ENCODE measurements at regions of chr19 and their contacts with region 1.

Region 1: GRCh38 chr19:6218491-6219162 is 61.1 kb downstream of the MLLT1 start:
- DNase-seq: no peak
- H3K4me3 ChIP-seq: no peak overlapping the region
- H3K27me3 ChIP-seq: no peaks in the 10 kb centered on the region
- CTCF ChIP-seq: peak; percentile 93

Region 2: DNA sequence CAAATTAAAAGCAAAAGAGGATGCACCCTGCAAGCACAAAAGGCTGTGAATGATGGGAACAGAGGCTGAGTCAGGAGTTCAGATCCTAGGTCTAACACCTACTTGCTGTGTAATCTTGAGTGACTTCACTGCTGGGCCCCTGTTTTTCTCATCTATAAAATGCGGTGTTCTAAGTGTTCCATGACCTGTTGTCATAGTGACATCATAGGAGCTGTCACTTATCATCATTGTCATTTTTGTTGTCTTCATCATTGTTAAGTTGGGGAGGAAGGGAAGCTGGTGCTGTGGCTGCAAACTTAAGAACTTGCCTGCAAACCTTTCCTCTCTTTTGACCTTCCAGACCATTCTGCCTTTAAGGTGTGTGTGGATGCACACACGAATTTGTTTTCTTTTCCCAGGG is 62.6 kb before region 1 on chr19:
- CTCF ChIA-PET with region 1: no interaction called
- POLR2A ChIA-PET with region 1: no interaction called
- DNase-seq: no peak
- H3K4me3 ChIP-seq: no peak overlapping the region
- H3K27me3 ChIP-seq: no peaks in the 10 kb centered on the region
- CTCF ChIP-seq: no peak

Region 3: GRCh38 chr19:6233051-6233826 is 14.6 kb after region 1 on chr19:
- CTCF ChIA-PET with region 1: interaction called, 18 read pairs
- POLR2A ChIA-PET with region 1: no interaction called
- DNase-seq: no peak
- H3K4me3 ChIP-seq: no peak overlapping the region
- H3K27me3 ChIP-seq: no peaks in the 10 kb centered on the region
- CTCF ChIP-seq: no peak

Region 4: GRCh38 chr19:6271721-6272410 is 53.2 kb after region 1 on chr19:
- CTCF ChIA-PET with region 1: interaction called, 38 read pairs
- POLR2A ChIA-PET with region 1: no interaction called
- DNase-seq: no peak
- H3K4me3 ChIP-seq: peak overlapping the region; percentile 8; the same call in 1 of the 2 replicates
- H3K27me3 ChIP-seq: no peaks in the 10 kb centered on the region
- CTCF ChIP-seq: peak; percentile 27; the same call in 1 of the 2 replicates

Region 5: DNA sequence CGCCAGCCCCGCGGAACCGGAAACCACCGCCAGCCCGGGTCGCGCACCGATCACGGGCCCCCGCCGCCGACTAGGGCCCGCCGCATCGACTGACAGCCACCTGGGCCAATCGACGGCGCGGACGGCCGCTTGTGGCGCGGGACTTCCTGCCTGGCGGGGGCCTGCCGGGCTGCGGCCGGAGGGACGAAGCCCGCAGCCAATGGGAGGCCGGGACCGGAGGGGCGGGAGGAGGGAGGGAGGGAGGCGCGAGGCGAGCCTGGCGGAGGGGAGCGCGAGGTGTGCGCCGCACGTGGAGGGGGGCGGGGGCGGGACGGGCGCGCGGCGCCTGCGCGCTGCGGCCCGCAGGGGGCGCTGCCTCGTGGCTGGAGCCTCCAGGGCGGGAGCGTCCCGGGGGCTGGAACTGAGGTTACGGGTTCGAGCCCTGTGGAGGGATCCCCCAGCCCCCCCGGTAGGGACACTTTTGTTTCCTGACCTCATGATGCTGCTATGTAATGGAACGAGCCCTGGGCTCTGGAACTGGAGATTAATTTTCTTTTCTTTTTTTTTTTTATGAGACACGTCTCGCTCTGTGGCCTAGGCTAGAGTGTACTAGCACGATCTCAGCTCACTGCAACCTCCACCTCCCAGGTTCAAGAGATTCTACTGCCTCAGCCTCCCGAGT is 61.4 kb after region 1 on chr19 and contains the start of gene MLLT1:
- CTCF ChIA-PET with region 1: interaction called, 38 read pairs
- POLR2A ChIA-PET with region 1: no interaction called
- DNase-seq: peak; percentile 74
- H3K4me3 ChIP-seq: peak within 1 kb of the TSS; percentile 88
- H3K27me3 ChIP-seq: no peaks in the 10 kb centered on the region
- CTCF ChIP-seq: peak; percentile 54
- polyA plus RNA-seq, gene MLLT1: 19.0 and 28.1 TPM in 2 replicates

Region 6: DNA sequence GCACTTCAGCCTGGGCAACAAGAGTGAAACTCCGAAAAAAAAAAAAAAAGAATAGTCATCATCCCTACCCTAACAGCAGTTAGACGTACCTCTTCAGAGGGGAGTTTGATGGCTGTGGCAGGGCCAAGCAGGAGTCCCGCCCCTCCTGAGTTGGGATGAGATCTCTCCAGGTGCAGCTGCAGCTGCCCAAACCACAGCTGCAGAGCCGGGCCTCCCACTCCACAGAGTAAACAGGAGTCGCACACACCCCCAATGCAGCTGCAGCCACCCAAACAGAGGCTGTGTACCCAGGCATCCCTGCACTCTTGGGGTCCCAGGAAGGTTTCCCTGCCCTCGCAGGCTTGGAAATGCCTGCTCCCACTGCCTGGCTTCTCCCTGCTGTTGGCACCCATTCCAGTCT is 78.6 kb after region 1 on chr19:
- CTCF ChIA-PET with region 1: interaction called, 160 read pairs
- POLR2A ChIA-PET with region 1: no interaction called
- DNase-seq: no peak
- H3K4me3 ChIP-seq: no peak overlapping the region
- H3K27me3 ChIP-seq: 0 out of 2 replicates have a peak, but pooled peaks cover 2% of the 10 kb centered on the region
- CTCF ChIP-seq: no peak

Region 7: DNA sequence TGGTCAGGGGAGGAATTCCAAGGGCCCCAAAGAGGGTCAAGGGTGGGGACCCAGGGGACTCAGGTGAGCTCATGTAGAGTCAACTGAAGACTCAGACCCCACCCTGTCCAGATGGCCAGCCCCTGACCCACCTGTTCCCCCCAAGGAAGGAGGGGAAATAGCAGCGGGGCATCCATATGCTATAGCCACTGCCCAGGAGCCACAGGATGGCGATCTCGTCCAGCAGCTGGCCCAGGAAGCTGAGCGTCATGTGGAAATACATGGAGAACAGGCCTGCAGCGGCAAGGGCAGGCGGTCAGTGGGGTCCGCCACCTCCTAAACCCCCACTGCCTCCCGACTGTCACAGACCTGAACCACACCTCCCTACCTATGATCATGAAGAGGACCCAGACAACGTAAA is 93.4 kb after region 1 on chr19:
- CTCF ChIA-PET with region 1: interaction called, 12 read pairs
- POLR2A ChIA-PET with region 1: no interaction called
- DNase-seq: no peak
- H3K4me3 ChIP-seq: no peak overlapping the region
- H3K27me3 ChIP-seq: no peaks in the 10 kb centered on the region
- CTCF ChIP-seq: no peak

Region 8: DNA sequence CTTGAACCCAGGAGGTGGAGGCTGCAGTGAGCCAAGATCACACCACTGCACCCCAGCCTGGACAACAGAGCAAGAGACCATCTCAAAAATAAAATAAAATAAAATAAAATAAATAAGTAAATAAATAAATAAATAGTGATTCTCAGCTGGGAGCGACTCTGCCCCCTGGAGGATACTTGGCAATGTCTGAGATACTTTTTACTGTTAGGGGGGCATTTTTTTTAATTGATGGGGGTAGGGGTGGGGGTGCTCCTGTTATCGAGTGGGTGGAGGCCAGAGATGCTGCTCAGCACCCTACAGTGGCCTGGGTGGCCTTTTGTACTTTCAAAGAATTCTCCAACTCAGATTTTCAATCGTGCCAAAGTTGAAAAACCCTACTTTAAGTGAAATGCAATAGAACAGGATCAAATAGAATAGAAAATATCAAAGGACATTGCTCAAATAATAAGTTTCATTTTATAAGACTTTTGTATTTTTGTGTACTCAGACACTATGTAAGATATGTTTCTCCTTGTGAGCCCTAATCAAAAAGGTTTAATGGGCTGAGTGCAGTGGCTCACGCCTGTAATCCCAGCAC is 135.6 kb after region 1 on chr19:
- CTCF ChIA-PET with region 1: interaction called, 17 read pairs
- POLR2A ChIA-PET with region 1: no interaction called
- DNase-seq: no peak
- H3K4me3 ChIP-seq: no peak overlapping the region
- H3K27me3 ChIP-seq: no peaks in the 10 kb centered on the region
- CTCF ChIP-seq: peak; percentile 63